ENCODE measurements at regions of chr7 and their contacts with region 1.

Region 1: DNA sequence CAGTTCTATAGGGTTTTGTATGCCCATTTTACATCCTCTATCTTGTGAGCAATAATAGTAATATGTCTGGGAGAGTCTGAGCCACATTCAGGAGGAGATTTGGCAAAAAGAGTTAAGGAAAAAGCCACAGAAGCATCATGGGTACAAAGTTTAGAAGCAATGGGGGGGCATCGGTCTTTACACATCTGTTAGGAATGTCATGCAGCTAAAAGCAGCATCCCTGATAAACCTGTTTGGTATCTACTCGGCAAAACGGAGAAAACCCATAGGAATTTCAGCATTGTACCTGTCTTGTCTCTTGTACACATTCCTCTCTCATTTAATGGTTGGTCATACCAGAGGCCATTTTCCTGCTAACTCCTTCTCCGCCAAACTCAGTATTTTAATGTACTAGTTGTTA is 12.5 kb upstream of the HERPUD2 start:
- DNase-seq: peak; percentile 24
- H3K4me3 Mint-ChIP-seq: no peak overlapping the region
- H3K27ac Mint-ChIP-seq: no peak overlapping the region
- H3K4me1 Mint-ChIP-seq: peaks cover 17% of the 10 kb centered on the region
- H3K27me3 Mint-ChIP-seq: no peaks in the 10 kb centered on the region
- CTCF ChIP-seq: no peak

Region 2: GRCh38 chr7:35646289-35647023 is 61.0 kb before region 1 on chr7:
- CTCF ChIA-PET with region 1: no interaction called
- intact Hi-C with region 1: no loop called
- DNase-seq: no peak
- H3K4me3 Mint-ChIP-seq: no peak overlapping the region
- H3K27ac Mint-ChIP-seq: no peak overlapping the region
- H3K4me1 Mint-ChIP-seq: no peaks in the 10 kb centered on the region
- H3K27me3 Mint-ChIP-seq: no peaks in the 10 kb centered on the region
- CTCF ChIP-seq: no peak

Region 3: DNA sequence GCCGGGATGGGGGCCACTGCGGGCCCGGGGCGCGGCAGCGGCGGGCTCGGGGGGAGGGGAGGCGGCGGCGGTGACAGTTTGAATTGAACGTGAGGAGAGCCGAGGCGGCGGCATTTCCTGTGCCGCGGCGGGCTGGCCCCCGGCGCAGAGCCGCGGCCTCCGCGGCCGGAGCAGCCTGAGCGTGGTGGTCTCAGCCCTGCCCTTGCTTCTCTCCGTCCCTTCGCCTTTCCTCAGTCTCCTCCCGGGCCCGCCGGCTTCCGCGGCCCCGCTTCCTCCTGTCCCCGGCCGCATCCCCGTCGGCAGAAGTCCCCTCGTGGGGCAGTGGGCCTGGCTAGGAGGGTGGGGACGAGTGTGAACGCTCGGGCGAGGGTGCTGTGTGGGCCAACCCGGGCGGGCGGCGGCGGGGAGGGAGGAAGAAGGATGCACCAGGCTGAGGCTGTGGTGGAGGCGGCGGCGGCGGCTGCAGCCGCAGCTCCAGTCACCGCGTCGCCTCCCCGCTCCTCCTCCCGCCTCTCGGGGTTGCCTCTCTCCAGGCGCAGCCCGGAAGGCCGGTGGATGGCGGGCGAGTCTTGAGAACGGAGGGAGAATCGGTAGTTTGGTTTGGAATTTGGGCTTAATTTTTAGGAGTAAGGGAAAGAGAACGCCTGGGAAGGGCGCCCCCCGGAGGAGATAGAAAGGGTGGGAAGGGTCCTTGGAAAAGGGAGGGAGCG is 94.1 kb after region 1 on chr7:
- CTCF ChIA-PET with region 1: interaction called, 16 read pairs
- intact Hi-C with region 1: loop called (anchors 1 kb)
- DNase-seq: peak; percentile 79
- H3K4me3 Mint-ChIP-seq: peak overlapping the region; percentile 88
- H3K27ac Mint-ChIP-seq: peak overlapping the region; percentile 66
- H3K4me1 Mint-ChIP-seq: peaks cover 43% of the 10 kb centered on the region
- H3K27me3 Mint-ChIP-seq: no peaks in the 10 kb centered on the region
- CTCF ChIP-seq: peak; percentile 71

Region 4: DNA sequence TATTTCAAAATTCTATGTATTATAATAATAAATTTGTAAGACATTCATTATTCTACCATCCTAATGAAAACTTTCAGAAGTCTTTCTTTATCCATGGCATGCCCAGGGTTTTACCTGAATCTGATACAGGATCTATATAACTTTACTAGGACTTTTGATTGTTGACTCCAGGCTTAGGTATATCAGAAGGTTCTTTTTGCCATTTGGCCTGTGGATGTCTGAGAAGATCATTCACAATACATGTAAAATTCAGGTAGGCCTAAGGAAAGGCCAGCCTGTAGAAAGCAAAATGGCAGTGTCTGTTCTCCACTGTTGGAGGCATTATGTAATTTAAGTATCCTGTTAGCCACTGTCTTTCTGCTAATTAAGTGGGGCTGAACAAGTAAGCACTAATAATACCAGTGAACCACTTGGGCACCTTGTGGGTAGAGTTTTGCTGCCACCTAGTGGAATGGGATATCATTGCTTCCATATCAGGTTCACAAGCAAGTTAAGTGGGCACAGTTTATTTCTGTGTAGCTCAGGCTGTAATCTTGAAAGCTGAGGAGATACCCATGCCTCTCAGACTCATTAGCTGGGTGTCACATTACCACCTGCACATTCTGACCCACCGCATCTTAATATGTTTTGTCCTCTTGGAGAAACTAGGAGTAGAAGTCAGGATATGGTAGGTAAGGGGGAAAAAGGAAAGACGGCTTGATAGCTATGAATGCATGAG is 198.9 kb after region 1 on chr7:
- CTCF ChIA-PET with region 1: interaction called, 16 read pairs
- intact Hi-C with region 1: loop called (anchors 1 kb)
- DNase-seq: peak; percentile 82
- H3K4me3 Mint-ChIP-seq: no peak overlapping the region
- H3K27ac Mint-ChIP-seq: no peak overlapping the region
- H3K4me1 Mint-ChIP-seq: no peaks in the 10 kb centered on the region
- H3K27me3 Mint-ChIP-seq: no peaks in the 10 kb centered on the region
- CTCF ChIP-seq: peak; percentile 97

Region 5: DNA sequence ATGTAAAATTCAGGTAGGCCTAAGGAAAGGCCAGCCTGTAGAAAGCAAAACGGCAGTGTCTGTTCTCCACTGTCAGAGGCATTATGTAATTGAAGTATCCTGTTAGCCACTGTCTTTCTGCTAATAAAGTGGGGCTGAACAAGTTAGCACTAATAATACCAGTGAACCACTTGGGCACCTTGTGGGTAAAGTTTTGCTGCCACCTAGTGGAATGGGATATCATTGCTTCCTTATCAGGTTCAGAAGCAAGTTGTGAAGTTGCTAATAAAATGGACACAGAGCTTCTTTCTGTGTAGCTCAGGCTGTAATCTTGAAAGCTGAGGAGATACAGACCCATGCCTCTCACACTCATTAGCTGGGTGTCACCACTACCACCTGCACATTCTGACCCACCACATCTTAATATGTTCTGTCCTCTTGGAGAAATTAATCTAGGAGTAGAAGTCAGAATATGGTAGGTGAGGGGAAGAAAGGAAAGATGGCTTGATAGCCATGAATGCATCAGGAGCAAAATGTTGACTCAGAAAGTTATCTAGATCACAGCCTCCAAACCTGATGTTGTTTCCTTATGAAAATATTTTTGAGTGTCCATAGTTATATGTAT is 268.5 kb after region 1 on chr7:
- CTCF ChIA-PET with region 1: no interaction called
- intact Hi-C with region 1: loop called (anchors 5 kb)
- DNase-seq: peak; percentile 80
- H3K4me3 Mint-ChIP-seq: no peak overlapping the region
- H3K27ac Mint-ChIP-seq: no peak overlapping the region
- H3K4me1 Mint-ChIP-seq: peaks cover 9% of the 10 kb centered on the region
- H3K27me3 Mint-ChIP-seq: no peaks in the 10 kb centered on the region
- CTCF ChIP-seq: peak; percentile 87

Measured in Calu3 (cell line).